Activated T-helper 2 cell treated with anti-CD3 and anti-CD28 coated beads, Interferon-gamma antibody, Interleukin-2, Interleukin-4, amounts not matched to agents 10 μg/mL and 5 μg/mL and 100 μg/mL, durations not matched to agents 14 hours and 24 hours and 36 hours (primary cell): ENCODE measurements at regions of chr7 and their contacts with region 1.

Region 1: GRCh38 chr7:13279854-13280435 is 592.5 kb downstream of the ARL4A start:
- DNase-seq: no peak
- H3K4me3 Mint-ChIP-seq: no peak overlapping the region
- H3K27ac Mint-ChIP-seq: no peak overlapping the region
- H3K4me1 Mint-ChIP-seq: no peaks in the 10 kb centered on the region
- H3K27me3 Mint-ChIP-seq: no peaks in the 10 kb centered on the region

Region 2: DNA sequence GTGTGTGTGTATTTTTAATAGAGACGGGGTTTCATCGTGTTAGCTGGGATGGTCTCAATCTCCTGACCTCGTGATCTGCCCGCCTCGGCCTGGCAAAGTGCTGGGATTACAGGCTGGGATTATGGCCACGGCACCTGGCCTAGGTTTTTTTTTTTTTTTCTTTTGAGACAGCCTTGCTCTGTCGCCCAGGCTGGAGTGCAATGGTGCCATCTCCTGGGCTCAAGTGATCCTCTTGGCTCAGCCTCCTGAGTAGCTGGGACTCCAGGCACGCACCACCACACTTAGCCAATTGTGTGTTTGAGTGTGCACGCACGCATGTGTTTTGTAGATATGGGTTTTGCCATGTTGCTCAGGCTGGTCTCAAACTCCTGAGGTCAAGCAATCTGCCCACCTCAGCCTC is 79.7 kb after region 1 on chr7:
- intact Hi-C with region 1: no loop called
- DNase-seq: no peak
- H3K4me3 Mint-ChIP-seq: no peak overlapping the region
- H3K27ac Mint-ChIP-seq: no peak overlapping the region
- H3K4me1 Mint-ChIP-seq: no peaks in the 10 kb centered on the region
- H3K27me3 Mint-ChIP-seq: no peaks in the 10 kb centered on the region

Region 3: DNA sequence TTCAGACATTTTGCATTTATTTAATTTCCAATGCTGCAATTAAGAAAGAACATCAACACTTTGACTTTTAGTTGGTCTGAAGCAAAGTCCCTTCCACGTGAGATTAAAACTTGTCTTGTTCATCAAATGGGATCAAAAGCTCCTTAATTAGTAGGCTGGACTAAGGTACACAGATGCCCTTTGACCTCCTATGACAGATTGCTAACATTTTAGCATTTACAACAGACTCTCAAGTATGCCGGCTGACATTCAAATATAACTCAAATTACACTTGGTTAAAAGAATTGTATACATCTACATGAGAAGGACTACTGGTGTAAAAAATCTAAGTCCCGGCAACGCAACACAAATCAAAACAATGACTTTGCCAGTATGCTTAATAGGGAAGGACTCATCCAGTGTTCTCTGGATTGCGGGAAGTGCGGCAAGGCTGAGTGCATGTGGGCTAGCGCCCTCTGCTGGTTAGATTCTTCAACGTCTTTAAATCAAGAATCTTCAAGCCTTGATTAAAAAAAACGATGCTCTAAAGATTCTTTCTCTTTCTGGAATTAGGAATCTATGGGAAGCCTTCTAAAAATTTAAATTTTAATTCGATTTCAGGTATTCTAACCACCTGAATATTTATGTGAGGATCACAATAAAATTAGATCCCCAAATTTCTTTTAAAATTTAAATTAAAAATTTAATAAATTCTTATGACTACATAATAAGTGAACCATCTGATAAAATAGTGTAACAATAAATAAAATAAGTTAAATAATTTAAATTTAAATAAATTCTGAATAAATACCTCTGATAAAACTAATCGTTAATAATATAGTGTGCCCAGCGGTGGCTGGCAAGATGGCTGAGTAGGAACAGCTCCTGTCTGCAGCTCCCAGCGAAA is 1177.9 kb after region 1 on chr7:
- intact Hi-C with region 1: loop called (anchors 2 kb)
- DNase-seq: peak; percentile 10
- H3K4me3 Mint-ChIP-seq: no peak overlapping the region
- H3K27ac Mint-ChIP-seq: no peak overlapping the region
- H3K4me1 Mint-ChIP-seq: no peaks in the 10 kb centered on the region
- H3K27me3 Mint-ChIP-seq: no peaks in the 10 kb centered on the region

Region 4: GRCh38 chr7:14691597-14692203 is 1411.8 kb after region 1 on chr7:
- intact Hi-C with region 1: loop called (anchors 5 kb)
- DNase-seq: no peak
- H3K4me3 Mint-ChIP-seq: no peak overlapping the region
- H3K27ac Mint-ChIP-seq: no peak overlapping the region
- H3K4me1 Mint-ChIP-seq: no peaks in the 10 kb centered on the region
- H3K27me3 Mint-ChIP-seq: no peaks in the 10 kb centered on the region